Cardiac septum (tissue), 1 donor: ENCODE measurements at regions of chr10 and their contacts with region 1.

Region 1: GRCh38 chr10:122142641-122143237 is 128.4 kb upstream of the BTBD16 start:
- DNase-seq: peak; percentile 82

Region 2: DNA sequence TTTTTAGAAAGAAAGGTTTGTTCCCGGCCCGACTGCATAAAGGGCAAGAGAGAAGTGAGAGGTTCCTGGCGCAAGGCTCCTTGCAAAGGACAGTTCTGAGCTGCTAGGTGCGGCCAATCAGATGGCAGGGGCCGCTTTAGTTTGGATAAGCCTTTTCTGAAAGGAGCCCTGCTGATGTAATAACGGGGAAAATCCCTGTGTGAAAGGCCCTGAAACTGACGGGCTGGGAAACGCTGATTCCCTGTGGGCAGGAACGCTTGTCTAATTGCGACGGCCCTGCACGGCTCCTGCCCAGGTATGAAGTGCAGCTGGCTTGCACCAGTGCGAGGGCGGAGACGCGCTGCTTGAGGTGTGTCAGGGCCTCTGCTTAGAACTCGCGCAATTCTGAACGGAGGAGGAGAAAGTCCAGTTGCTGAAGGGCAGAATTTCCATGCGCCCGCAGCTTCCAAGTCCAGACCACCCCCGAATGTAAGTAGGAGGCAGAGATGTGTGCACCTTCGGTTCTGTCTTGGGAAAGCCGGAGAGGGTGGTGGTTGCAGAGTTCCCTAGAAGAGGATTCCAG is 123.2 kb before region 1 on chr10:
- intact Hi-C with region 1: no loop called
- DNase-seq: no peak

Region 3: DNA sequence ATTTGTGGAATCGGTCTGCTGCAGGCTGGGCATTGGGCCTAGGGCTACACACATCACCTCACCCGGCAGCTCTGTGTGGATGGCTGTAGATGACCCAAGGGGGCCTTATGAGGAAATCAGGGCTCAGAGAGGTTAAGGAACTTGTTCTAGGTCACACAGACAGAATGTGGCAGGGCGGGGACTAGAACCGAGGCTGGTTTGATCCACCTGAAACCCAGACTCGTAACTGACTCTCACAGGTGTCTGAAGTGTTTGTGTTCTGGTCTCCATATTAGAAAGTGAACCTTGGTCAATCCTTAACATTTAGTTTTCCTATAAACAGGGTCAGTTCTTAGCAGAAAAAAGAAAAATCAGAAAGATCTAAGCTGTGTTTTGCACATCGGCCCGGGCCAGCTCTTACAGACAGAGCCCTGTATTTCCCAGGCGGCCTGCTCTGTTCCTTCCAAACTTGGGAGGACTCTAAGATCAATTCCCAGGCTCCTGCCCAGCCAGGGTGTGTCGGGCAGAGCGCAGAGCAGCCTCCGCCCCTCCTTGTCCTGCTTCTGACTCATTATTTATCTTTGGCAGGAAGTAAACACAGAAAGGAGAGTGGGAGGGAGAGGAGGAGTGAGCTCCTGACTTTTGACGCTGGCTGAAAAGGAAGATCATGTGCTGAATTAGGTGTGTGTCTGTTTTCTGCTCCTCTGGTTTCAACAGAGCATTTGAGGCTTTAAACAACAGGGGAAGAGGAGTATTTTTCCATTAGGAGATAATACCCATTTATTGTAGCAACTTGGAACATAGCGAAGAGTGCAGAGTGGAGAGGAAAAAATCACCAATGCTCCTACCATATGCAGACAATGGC is 79.7 kb before region 1 on chr10:
- intact Hi-C with region 1: loop called (anchors 2 kb)
- DNase-seq: peak; percentile 86

Region 4: DNA sequence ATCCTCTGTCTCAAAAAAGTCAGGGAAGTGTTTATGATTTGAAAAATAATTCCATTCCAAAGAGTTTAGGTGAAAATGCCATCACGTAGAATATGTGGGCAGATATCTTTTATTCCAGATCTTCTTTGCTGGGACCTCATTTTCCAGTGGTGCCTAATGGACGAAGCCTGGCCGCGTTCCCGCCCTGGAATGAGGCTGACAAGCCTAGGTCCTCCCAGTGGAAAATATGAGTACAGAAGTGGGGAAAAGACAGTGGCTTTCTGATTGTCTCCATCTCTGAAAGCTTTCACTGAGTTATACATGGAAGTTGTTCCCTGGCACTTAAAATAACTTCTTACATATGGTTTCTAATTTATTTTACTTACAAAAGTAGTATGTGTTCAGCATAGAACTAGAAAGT is 14.4 kb before region 1 on chr10:
- intact Hi-C with region 1: loop called (anchors 1 kb)
- DNase-seq: no peak

Region 5: GRCh38 chr10:122213766-122214165 is 71.0 kb after region 1 on chr10:
- intact Hi-C with region 1: loop called (anchors 2 kb)
- DNase-seq: no peak